ENCODE measurements at regions of chr10 and their contacts with region 1.

Region 1: GRCh38 chr10:110304780-110305421 is at the start of gene SMNDC1:
- DNase-seq: peak; percentile 97 to 99 (median 97)
- H3K4me3 ChIP-seq: peak within 1 kb of the TSS; percentile 67 to 89 (median 88)
- H3K4me3 Mint-ChIP-seq: peak within 1 kb of the TSS; percentile 94 to 98
- H3K27ac ChIP-seq: peak within 1 kb of the TSS; percentile 77 to 91
- H3K27ac Mint-ChIP-seq: peak within 1 kb of the TSS; percentile 93 to 99 (median 97)
- H3K4me1 ChIP-seq: peaks cover 31 to 55% of the 10 kb centered on the region in 2 donors
- H3K4me1 Mint-ChIP-seq: peaks cover 51% of the 10 kb centered on the region
- H3K27me3 ChIP-seq: no peaks in the 10 kb centered on the region
- H3K27me3 Mint-ChIP-seq: peaks cover 0 to 4% (median 0%) of the 10 kb centered on the region in 3 donors
- CTCF ChIP-seq: no peak
- polyA plus RNA-seq, gene SMNDC1: 15.6 to 18.2 (median 16.4) TPM

Region 2: GRCh38 chr10:110414563-110415309 is 109.8 kb after region 1 on chr10:
- intact Hi-C with region 1: loop called in 1 of 2 experiments (anchors 5 kb)
- DNase-seq: peak; percentile 79 to 98 (median 88)
- H3K4me3 ChIP-seq: peak overlapping the region in 1 of 3 experiments; percentile 35
- H3K4me3 Mint-ChIP-seq: peak overlapping the region; percentile 17 to 38
- H3K27ac ChIP-seq: peak overlapping the region; percentile 3 to 65
- H3K27ac Mint-ChIP-seq: peak overlapping the region; percentile 19 to 89 (median 72)
- H3K4me1 ChIP-seq: peaks cover 44 to 61% of the 10 kb centered on the region in 2 donors
- H3K4me1 Mint-ChIP-seq: peaks cover 62% of the 10 kb centered on the region
- H3K27me3 ChIP-seq: no peaks in the 10 kb centered on the region
- H3K27me3 Mint-ChIP-seq: peaks cover 1 to 12% (median 3%) of the 10 kb centered on the region in 3 donors
- CTCF ChIP-seq: no peak

Region 3: GRCh38 chr10:110547139-110547761 is 242.3 kb after region 1 on chr10:
- intact Hi-C with region 1: loop called in 1 of 2 experiments (anchors 2 kb)
- DNase-seq: peak; percentile 37 to 67 (median 66)
- H3K4me3 ChIP-seq: no peak overlapping the region
- H3K4me3 Mint-ChIP-seq: no peak overlapping the region
- H3K27ac ChIP-seq: no peak overlapping the region
- H3K27ac Mint-ChIP-seq: no peak overlapping the region
- H3K4me1 ChIP-seq: no peaks in the 10 kb centered on the region
- H3K4me1 Mint-ChIP-seq: peaks cover 2% of the 10 kb centered on the region
- H3K27me3 ChIP-seq: no peaks in the 10 kb centered on the region
- H3K27me3 Mint-ChIP-seq: peaks cover 2 to 6% (median 3%) of the 10 kb centered on the region in 3 donors
- CTCF ChIP-seq: peak; percentile 83

Region 4: GRCh38 chr10:110567201-110568054 is 262.5 kb after region 1 on chr10 and contains the start of gene SMC3:
- intact Hi-C with region 1: loop called (anchors 5 to 10 kb)
- DNase-seq: peak; percentile 87 to 90 (median 87)
- H3K4me3 ChIP-seq: peak within 1 kb of the TSS; percentile 58 to 98 (median 90)
- H3K4me3 Mint-ChIP-seq: peak within 1 kb of the TSS; percentile 91 to 98
- H3K27ac ChIP-seq: peak within 1 kb of the TSS; percentile 61 to 89
- H3K27ac Mint-ChIP-seq: peak within 1 kb of the TSS; percentile 91 to 98 (median 97)
- H3K4me1 ChIP-seq: peaks cover 16 to 30% of the 10 kb centered on the region in 2 donors
- H3K4me1 Mint-ChIP-seq: peaks cover 36% of the 10 kb centered on the region
- H3K27me3 ChIP-seq: no peaks in the 10 kb centered on the region
- H3K27me3 Mint-ChIP-seq: peaks cover 0 to 5% (median 3%) of the 10 kb centered on the region in 3 donors
- CTCF ChIP-seq: no peak
- polyA plus RNA-seq, gene SMC3: 5.0 to 33.9 (median 21.1) TPM

Region 5: DNA sequence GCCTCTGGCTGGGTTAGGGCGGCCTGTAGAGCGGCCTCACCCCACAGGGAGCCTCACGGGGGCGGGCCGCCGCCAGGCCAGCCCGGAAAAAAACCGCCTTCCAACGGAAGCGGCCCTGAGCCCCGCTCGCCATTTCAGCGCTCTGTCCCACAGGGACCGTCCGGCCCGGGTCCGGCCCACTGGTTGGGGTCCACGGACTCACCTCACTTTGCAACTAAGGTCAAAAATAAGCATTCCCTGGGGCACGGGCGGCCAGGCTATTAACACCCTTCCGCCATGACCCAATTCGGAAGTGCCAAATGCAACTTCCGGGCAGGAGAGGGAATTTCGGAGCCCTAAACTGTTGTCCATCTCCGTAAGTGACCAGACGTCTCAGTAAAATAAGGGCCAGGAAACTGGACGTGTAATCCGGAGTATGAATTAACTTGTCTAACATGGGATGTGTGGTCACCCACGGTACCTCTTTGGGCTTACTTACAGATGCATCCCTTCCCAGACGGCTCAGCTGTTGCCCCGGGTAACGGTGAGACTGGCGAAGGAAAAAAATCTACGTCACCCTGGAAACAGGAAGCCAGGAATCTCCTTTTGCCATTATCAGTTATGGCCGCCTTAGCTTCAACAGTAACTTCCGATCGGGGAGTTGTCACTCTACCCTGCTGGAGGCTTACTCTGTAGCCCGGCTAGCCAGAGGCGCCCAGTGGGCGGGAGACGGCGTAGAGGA is 613.9 kb after region 1 on chr10 and contains the start of gene BBIP1:
- intact Hi-C with region 1: loop called in 1 of 2 experiments (anchors 5 kb)
- DNase-seq: peak; percentile 100
- H3K4me3 ChIP-seq: peak within 1 kb of the TSS; percentile 88 to 98 (median 96)
- H3K4me3 Mint-ChIP-seq: peak within 1 kb of the TSS; percentile 97
- H3K27ac ChIP-seq: peak within 1 kb of the TSS; percentile 94 to 99
- H3K27ac Mint-ChIP-seq: peak within 1 kb of the TSS; percentile 99 to 100 (median 100)
- H3K4me1 ChIP-seq: peaks cover 16 to 31% of the 10 kb centered on the region in 2 donors
- H3K4me1 Mint-ChIP-seq: peaks cover 37% of the 10 kb centered on the region
- H3K27me3 ChIP-seq: no peaks in the 10 kb centered on the region
- H3K27me3 Mint-ChIP-seq: no peaks in the 10 kb centered on the region
- CTCF ChIP-seq: no peak
- polyA plus RNA-seq, gene BBIP1: 16.2 to 41.1 (median 26.6) TPM

Measured in CD14-positive monocyte (primary cell).